ENCODE measurements at regions of chr18 and their contacts with region 1.

Region 1: GRCh38 chr18:23259701-23260582 is 124.7 kb downstream of the CABLES1 start:
- DNase-seq: peak; percentile 46 to 89
- H3K4me3 ChIP-seq: peak overlapping the region; percentile 39 to 55
- H3K27ac ChIP-seq: peak overlapping the region; percentile 95 to 97
- H3K4me1 ChIP-seq: peaks cover 18 to 30% of the 10 kb centered on the region in 2 donors
- H3K27me3 ChIP-seq: no peaks in the 10 kb centered on the region
- CTCF ChIP-seq: no peak

Region 2: GRCh38 chr18:23311351-23312121 is 51.6 kb after region 1 on chr18:
- intact Hi-C with region 1: loop called (anchors 1 kb)
- DNase-seq: peak; percentile 59 to 95
- H3K4me3 ChIP-seq: peak overlapping the region in 1 of 2 donors; percentile 32
- H3K27ac ChIP-seq: peak overlapping the region; percentile 88 to 89
- H3K4me1 ChIP-seq: peaks cover 9 to 28% of the 10 kb centered on the region in 2 donors
- H3K27me3 ChIP-seq: no peaks in the 10 kb centered on the region
- CTCF ChIP-seq: no peak

Measured in ascending aorta (tissue), 2 donors.